ENCODE measurements at regions of chr10 and their contacts with region 1.

Region 1: DNA sequence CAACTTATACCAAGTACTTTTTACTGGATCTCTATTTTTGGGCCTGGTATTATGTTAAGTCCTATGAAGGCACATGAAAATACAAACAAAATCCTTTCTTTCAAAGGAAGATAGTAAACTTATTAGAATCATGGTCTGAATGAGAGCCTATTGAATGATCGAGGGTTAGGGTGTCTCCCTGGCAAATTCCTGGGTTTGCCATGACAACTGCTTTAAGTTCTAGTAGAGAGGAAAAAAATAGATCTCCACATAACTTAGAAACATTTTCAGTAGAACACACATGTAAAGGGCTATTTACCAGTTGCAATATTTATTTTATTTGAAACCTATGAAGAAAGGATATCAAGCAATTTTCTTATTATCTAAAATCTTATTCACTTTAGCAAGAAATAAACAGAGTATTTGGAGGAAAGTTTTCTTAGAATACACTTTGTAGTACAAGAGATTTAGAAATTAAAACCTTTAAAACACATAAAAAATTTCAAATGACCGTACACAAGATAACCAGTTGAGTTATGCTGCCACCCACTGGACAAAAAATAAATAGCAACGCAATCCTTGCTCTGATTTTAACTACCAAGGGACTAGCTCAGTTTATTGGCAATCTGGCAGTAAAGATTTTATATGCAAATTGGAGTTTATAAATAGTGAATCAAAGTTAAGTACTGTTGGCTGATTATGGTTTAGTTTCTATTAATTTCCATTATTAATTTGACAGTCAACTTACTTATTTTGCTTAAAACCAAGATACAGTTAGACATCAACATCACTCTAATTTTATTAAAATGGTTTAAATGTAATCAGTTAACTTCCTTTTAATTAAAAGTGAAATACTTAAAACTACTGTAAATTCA is 33.9 kb downstream of the CACUL1 start:
- DNase-seq: no peak
- H3K4me3 ChIP-seq: no peak overlapping the region
- H3K27ac ChIP-seq: no peak overlapping the region
- H3K4me1 ChIP-seq: no peaks in the 10 kb centered on the region
- H3K27me3 ChIP-seq: no peaks in the 10 kb centered on the region
- CTCF ChIP-seq: peak in 2 of 3 experiments; percentile 54 to 67

Region 2: GRCh38 chr10:119006451-119007210 is 285.7 kb after region 1 on chr10:
- dilution Hi-C with region 1: loop called (anchors 25 kb)
- DNase-seq: no peak
- H3K4me3 ChIP-seq: no peak overlapping the region
- H3K27ac ChIP-seq: no peak overlapping the region
- H3K4me1 ChIP-seq: peaks cover 23% of the 10 kb centered on the region
- H3K27me3 ChIP-seq: no peaks in the 10 kb centered on the region
- CTCF ChIP-seq: no peak

Measured in keratinocyte (primary cell).